ENCODE measurements at regions of chr1 and their contacts with region 1.

Region 1: DNA sequence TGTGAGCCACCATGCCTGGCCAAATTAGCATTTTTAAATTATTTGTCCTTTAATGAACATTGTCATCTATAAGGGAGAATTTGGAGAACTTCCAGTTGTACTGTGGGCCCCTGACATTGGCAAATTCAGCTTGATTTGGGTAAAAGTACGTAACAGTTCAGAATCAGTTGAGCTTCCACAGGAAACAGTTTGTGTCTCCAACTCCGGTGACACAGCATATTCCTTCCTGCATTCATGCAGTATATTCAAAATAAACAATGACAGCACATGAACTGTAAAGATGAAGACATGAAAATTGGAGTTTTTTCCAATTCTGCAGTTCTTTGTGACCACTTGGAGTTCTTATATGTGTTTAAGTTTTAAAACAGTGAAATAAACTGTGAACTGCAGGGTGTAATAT is 28.2 kb downstream of the RNF220 start:
- DNase-seq: no peak
- H3K4me3 ChIP-seq: no peak overlapping the region
- H3K27ac ChIP-seq: no peak overlapping the region
- H3K4me1 ChIP-seq: no peaks in the 10 kb centered on the region
- H3K27me3 ChIP-seq: no peaks in the 10 kb centered on the region
- CTCF ChIP-seq: no peak

Region 2: DNA sequence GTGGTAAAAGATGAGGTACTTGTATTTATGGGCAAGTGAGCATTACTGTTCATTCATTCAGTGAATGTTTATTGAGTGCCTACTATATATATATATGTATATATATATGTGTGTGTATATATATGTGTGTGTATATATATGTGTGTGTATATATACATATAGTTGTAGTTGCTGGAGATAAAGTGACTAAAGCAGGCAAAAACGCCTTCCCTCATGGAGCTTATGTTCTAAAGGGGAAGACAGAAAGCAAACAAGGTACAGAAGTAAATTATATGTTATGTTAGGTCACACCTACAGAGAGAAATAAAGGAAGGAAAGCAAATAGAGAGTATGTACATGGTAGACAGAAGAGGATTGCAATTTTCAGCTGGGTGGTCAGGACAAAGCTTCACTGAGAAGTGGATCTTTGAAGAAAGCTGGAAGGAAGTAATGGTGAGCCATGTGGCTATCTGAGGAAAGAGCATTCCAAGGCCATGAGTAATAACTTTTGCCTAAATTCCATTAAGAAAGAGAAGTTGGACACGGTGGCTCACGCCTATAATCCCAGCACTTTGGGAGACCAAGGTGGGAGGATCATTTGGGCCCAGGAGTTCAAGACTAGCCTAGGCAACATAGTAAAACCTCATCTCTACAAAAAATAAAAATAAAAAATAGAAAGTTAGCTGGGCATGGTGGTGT is 348.1 kb before region 1 on chr1:
- intact Hi-C with region 1: no loop called
- DNase-seq: no peak
- H3K4me3 ChIP-seq: no peak overlapping the region
- H3K27ac ChIP-seq: no peak overlapping the region
- H3K4me1 ChIP-seq: no peaks in the 10 kb centered on the region
- H3K27me3 ChIP-seq: no peaks in the 10 kb centered on the region
- CTCF ChIP-seq: no peak

Region 3: GRCh38 chr1:44472620-44473525 is 39.7 kb after region 1 on chr1:
- intact Hi-C with region 1: loop called (anchors 5 kb)
- DNase-seq: no peak
- H3K4me3 ChIP-seq: peak overlapping the region in 1 of 2 donors; percentile 24
- H3K27ac ChIP-seq: peak overlapping the region in 1 of 2 donors; percentile 39
- H3K4me1 ChIP-seq: peaks cover 0 to 11% of the 10 kb centered on the region in 2 donors
- H3K27me3 ChIP-seq: no peaks in the 10 kb centered on the region
- CTCF ChIP-seq: no peak

Region 4: GRCh38 chr1:44684525-44684924 is 251.3 kb after region 1 on chr1:
- intact Hi-C with region 1: no loop called
- DNase-seq: no peak
- H3K4me3 ChIP-seq: no peak overlapping the region
- H3K27ac ChIP-seq: no peak overlapping the region
- H3K4me1 ChIP-seq: no peaks in the 10 kb centered on the region
- H3K27me3 ChIP-seq: no peaks in the 10 kb centered on the region
- CTCF ChIP-seq: no peak